A549 (cell line): ENCODE measurements at regions of chr9 and their contacts with region 1.

Region 1: DNA sequence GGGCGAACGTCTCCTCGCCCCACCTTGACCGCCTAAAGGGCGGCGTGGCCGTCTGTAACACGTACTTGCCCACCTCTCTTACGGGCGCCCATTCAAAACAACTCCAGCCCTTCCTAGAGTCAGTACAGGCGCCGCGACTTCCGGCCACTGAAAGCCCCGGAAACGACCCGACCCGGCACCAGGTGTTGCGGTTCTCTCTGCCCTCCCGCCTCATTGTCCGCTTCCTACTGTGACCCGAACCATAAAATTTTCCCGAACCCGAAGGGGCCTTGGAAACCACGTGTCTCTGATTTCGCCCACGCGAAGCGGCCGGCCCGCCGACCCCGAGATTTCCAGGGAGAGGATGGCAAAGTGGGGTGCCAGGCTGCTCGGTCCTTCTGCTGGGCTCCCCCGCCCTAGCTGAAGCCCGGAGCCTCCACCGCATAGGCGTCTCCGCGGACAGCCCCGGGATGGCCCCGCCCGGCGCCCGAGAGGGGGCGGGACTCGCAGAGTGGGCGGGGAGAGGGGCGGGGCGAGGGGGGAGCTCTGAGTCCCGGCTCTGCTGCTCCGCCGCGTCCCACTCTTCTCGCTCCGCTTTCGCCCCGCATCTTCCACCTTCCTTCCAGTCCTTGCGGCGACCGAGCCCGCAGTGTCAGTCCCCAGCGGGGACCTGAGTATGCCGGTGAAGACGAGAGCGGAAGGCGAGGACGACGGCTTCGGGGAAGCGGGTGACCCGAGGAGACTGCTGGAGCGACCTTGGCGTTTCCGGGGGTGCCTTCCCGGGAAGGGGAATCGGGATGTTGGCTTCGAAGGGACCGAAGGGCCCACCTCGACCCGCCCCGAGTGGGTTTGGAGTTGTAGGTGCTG is 684 bp upstream of the PTGES2 start:
- DNase-seq: peak; percentile 51 to 93
- ATAC-seq: peak; percentile 71 to 88
- H3K4me3 ChIP-seq: peak overlapping the region; percentile 87
- H3K27ac ChIP-seq: peak overlapping the region; percentile 92 to 99
- H3K4me1 ChIP-seq: peaks cover 29% of the 10 kb centered on the region
- CTCF ChIP-seq: no peak
- EP300 ChIP-seq: no peak
- POLR2A ChIP-seq: peak; percentile 72
- RAD21 ChIP-seq: no peak

Region 2: DNA sequence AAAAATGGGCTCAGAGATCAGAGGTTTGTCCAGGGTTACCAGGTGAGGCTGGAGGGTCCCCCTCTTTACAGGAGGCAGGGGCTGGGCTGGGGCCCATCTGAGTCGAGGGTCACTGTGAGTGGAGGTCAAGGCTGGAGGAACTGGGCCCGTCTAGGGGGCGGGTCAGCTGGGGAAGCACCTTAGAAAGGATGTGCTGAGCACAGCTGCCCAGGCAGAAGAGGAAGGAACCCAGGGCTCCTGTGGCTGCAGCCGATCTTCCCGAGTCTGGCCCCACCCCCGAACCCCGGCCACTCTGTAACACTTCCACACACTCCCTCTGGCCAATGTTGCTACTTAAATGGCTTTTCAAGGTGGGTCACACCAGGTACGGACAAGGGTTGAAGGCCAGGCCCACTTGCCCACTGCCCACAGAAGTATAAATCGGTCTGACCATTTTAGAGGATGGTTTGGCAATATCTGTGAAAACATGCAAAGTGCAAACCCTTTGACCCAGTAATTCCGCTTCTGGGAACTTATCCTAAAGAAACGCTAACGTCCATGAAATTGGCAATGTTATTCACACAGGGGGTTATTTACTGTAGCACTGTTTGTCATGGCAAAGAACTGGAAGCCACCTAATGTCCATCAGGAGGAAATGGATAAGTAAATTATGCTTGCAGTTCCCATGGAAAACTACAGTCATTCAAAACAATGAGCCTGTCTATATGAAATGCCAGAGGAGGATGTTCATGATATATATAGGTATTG is 117.0 kb before region 1 on chr9:
- CTCF ChIA-PET with region 1: no interaction called
- POLR2A ChIA-PET with region 1: no interaction called
- DNase-seq: peak in 1 of 2 experiments; percentile 87
- ATAC-seq: peak; percentile 72 to 75
- H3K4me3 ChIP-seq: no peak overlapping the region
- H3K27ac ChIP-seq: peak overlapping the region; percentile 72 to 87
- H3K4me1 ChIP-seq: peaks cover 34% of the 10 kb centered on the region
- CTCF ChIP-seq: no peak
- EP300 ChIP-seq: no peak
- POLR2A ChIP-seq: no peak
- RAD21 ChIP-seq: peak in 1 of 2 experiments; percentile 13; a peak in 1 of 5 replicates

Region 3: GRCh38 chr9:128094166-128094967 is 33.8 kb before region 1 on chr9:
- CTCF ChIA-PET with region 1: interaction called, 25 read pairs
- POLR2A ChIA-PET with region 1: interaction called, 3 read pairs
- DNase-seq: peak; percentile 94
- ATAC-seq: peak; percentile 75 to 83
- H3K4me3 ChIP-seq: no peak overlapping the region
- H3K27ac ChIP-seq: peak overlapping the region; percentile 20 to 68; a peak in 4 of 6 replicates
- H3K4me1 ChIP-seq: peaks cover 35% of the 10 kb centered on the region
- CTCF ChIP-seq: no peak
- EP300 ChIP-seq: no peak
- POLR2A ChIP-seq: no peak
- RAD21 ChIP-seq: no peak

Region 4: DNA sequence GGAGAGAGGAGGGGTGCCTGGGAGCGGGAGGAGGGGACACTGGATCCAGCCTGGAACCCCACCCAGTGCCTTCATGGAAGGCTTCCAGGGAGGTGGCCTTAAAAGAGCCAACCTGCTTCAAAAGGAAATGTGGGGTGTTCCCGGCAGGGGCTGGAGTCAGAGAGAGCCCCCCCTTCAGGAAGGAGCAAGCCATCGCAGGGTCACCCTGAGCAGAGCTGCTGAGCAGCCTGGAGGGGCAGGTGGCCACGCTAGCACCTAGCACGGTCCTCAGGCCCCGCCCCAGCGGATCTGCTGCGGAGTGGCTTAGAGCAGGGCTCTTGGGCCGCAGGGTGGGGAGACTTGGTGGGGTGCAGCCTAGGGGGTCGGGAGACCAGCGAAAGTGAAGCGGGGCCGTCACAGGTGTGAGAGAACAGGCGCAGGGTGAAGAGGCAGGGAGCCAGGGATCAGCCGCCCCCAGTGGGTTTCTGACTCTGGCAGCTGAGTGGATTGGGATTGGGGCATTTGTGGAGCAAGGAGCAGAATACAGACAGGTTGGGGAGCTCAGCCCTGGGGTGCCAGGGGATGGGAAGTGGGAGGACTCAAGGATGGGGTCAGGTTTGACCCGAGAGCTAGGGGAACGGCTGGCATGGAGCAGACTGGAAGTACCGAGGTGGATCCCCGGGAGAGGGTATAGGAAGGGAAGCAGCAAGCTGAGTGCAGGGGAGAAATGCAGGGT is 22.5 kb after region 1 on chr9:
- CTCF ChIA-PET with region 1: interaction called, 15 read pairs
- POLR2A ChIA-PET with region 1: interaction called, 3 read pairs
- DNase-seq: peak; percentile 33 to 42
- ATAC-seq: peak; percentile 14 to 73; a peak in 3 of 6 replicates
- H3K4me3 ChIP-seq: no peak overlapping the region
- H3K27ac ChIP-seq: peak overlapping the region; percentile 76 to 82; a peak in 5 of 6 replicates
- H3K4me1 ChIP-seq: peaks cover 31% of the 10 kb centered on the region
- CTCF ChIP-seq: peak; percentile 9; the same call in 1 of the 3 replicates
- EP300 ChIP-seq: no peak
- POLR2A ChIP-seq: no peak
- RAD21 ChIP-seq: no peak

Region 5: GRCh38 chr9:128159784-128160602 is 31.8 kb after region 1 on chr9 and contains the start of gene BBLN:
- CTCF ChIA-PET with region 1: interaction called, 9 read pairs
- POLR2A ChIA-PET with region 1: interaction called, 12 read pairs
- DNase-seq: peak; percentile 92 to 95
- ATAC-seq: peak; percentile 75 to 91
- H3K4me3 ChIP-seq: peak within 1 kb of the TSS; percentile 85
- H3K27ac ChIP-seq: peak within 1 kb of the TSS; percentile 86 to 89
- H3K4me1 ChIP-seq: peaks cover 11% of the 10 kb centered on the region; the same call in 1 of the 3 replicates
- CTCF ChIP-seq: no peak
- EP300 ChIP-seq: no peak
- POLR2A ChIP-seq: peak; percentile 69
- RAD21 ChIP-seq: no peak
- polyA plus RNA-seq, gene BBLN: 23.0 and 23.8 TPM in 2 replicates

Region 6: DNA sequence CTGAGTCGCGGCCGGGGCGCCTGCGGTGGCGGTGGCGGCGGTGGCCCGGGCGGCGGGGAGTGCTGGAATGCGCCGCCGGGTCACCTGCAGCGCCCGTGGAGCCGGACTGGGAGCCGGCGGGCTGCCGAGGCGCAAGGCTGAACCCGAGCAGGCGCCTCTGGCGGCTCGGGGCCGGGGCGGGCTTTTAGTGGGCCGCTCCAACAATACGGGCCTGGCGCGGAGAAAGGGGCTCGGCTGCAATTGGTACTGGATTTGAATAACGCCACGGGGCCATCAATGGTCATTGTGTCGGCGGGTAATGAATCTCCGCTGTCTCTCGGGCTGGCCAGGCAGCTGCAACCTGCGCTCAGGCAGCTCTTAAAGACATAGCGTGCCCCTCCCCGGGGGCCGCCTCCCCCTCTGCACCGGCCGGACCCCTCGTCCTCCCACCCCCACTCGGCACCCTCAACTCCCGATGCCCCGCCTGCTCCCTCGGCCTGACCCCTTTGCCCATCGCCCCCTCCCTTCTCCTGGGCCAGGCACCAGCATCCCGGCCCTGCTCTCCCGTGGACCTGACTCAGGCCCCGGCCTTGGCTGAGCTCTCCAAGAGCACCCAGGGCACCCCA is 265.1 kb after region 1 on chr9:
- CTCF ChIA-PET with region 1: no interaction called
- POLR2A ChIA-PET with region 1: no interaction called
- DNase-seq: no peak
- ATAC-seq: no peak
- H3K4me3 ChIP-seq: no peak overlapping the region
- H3K27ac ChIP-seq: no peak overlapping the region
- H3K4me1 ChIP-seq: no peaks in the 10 kb centered on the region
- CTCF ChIP-seq: no peak
- EP300 ChIP-seq: no peak
- POLR2A ChIP-seq: no peak
- RAD21 ChIP-seq: no peak

Region 7: DNA sequence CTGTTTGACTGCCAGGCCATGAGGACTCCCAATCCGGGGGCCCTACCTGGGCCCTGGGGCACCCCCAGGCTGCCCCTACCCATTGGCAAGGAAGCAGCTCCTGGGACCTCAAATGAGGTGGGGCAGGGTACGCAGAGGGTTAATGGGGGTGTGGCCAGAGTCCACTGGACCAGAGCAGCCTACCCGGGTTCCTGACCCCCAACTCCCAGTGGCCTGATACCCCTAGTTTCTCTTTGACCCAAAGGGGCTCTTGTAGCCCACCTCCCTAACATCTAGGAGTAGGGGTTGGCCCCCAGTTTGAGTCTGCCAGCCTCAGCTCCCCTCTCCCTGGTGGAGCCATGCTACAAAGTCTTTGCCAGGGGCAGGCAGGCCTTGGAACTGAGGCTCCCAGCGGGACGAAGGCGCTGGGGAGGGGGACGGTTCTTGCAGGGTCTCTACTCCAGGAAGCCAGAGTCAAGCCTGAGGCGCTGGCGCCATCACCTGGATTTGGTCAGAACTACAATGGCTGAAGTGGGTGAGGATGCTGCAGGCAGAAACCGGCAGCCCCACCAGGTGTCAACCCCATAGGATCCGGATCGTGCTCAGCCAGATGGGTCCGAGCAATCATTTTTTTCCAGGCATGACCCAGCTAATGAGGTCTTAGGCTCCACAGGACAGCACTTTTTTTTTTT is 284.0 kb after region 1 on chr9:
- CTCF ChIA-PET with region 1: no interaction called
- POLR2A ChIA-PET with region 1: no interaction called
- DNase-seq: peak; percentile 30 to 52
- ATAC-seq: peak in 1 of 2 experiments; percentile 71; a peak in 3 of 6 replicates
- H3K4me3 ChIP-seq: no peak overlapping the region
- H3K27ac ChIP-seq: no peak overlapping the region; a peak in 1 of 6 replicates
- H3K4me1 ChIP-seq: no peaks in the 10 kb centered on the region
- CTCF ChIP-seq: peak; percentile 42; the same call in 2 of the 3 replicates
- EP300 ChIP-seq: no peak
- POLR2A ChIP-seq: no peak
- RAD21 ChIP-seq: peak; percentile 60 to 79

Region 8: GRCh38 chr9:128422458-128423150 is 294.4 kb after region 1 on chr9:
- CTCF ChIA-PET with region 1: no interaction called
- POLR2A ChIA-PET with region 1: no interaction called
- DNase-seq: no peak
- ATAC-seq: no peak
- H3K4me3 ChIP-seq: no peak overlapping the region
- H3K27ac ChIP-seq: no peak overlapping the region
- H3K4me1 ChIP-seq: peaks cover 17% of the 10 kb centered on the region; the same call in 2 of the 3 replicates
- CTCF ChIP-seq: no peak
- EP300 ChIP-seq: no peak
- POLR2A ChIP-seq: no peak
- RAD21 ChIP-seq: no peak